ENCODE measurements at regions of chr7 and their contacts with region 1.

Region 1: GRCh38 chr7:93231799-93232672 is at the start of gene VPS50:
- DNase-seq: peak; percentile 96
- ATAC-seq: peak; percentile 99
- H3K4me3 Mint-ChIP-seq: peak within 1 kb of the TSS; percentile 85
- H3K27ac Mint-ChIP-seq: peak within 1 kb of the TSS; percentile 88
- H3K4me1 Mint-ChIP-seq: peaks cover 10% of the 10 kb centered on the region
- H3K27me3 Mint-ChIP-seq: no peaks in the 10 kb centered on the region
- total RNA-seq, gene VPS50: 12.8 to 14.7 TPM

Region 2: GRCh38 chr7:91940572-91941341 is 1291.3 kb before region 1 on chr7 and contains the start of gene AKAP9:
- CTCF ChIA-PET with region 1: no interaction called
- POLR2A ChIA-PET with region 1: no interaction called
- intact Hi-C with region 1: loop called in 1 of 2 experiments (anchors 5 kb)
- DNase-seq: peak; percentile 94
- ATAC-seq: peak; percentile 91
- H3K4me3 Mint-ChIP-seq: peak within 1 kb of the TSS; percentile 87
- H3K27ac Mint-ChIP-seq: peak within 1 kb of the TSS; percentile 94
- H3K4me1 Mint-ChIP-seq: peaks cover 29% of the 10 kb centered on the region
- H3K27me3 Mint-ChIP-seq: no peaks in the 10 kb centered on the region
- total RNA-seq, gene AKAP9: 25.3 to 25.4 TPM

Region 3: GRCh38 chr7:92528188-92528957 is 703.7 kb before region 1 on chr7 and contains the starts of genes PEX1 and RBM48:
- CTCF ChIA-PET with region 1: no interaction called
- POLR2A ChIA-PET with region 1: no interaction called
- intact Hi-C with region 1: loop called (anchors 1 kb)
- DNase-seq: peak; percentile 98
- ATAC-seq: peak; percentile 95
- H3K4me3 Mint-ChIP-seq: peak within 1 kb of the TSS; percentile 90
- H3K27ac Mint-ChIP-seq: peak within 1 kb of the TSS; percentile 93
- H3K4me1 Mint-ChIP-seq: peaks cover 29% of the 10 kb centered on the region
- H3K27me3 Mint-ChIP-seq: no peaks in the 10 kb centered on the region
- total RNA-seq, gene PEX1: 14.7 to 16.0 TPM
- total RNA-seq, gene RBM48: 12.8 to 13.1 TPM

Region 4: GRCh38 chr7:92621026-92621540 is 611.0 kb before region 1 on chr7:
- CTCF ChIA-PET with region 1: no interaction called
- POLR2A ChIA-PET with region 1: no interaction called
- intact Hi-C with region 1: loop called in 1 of 2 experiments (anchors 1 kb)
- DNase-seq: peak; percentile 90
- ATAC-seq: peak; percentile 78
- H3K4me3 Mint-ChIP-seq: peak overlapping the region; percentile 0
- H3K27ac Mint-ChIP-seq: peak overlapping the region; percentile 90
- H3K4me1 Mint-ChIP-seq: peaks cover 50% of the 10 kb centered on the region
- H3K27me3 Mint-ChIP-seq: no peaks in the 10 kb centered on the region

Region 5: GRCh38 chr7:93117852-93118530 is 114.0 kb before region 1 on chr7 and contains the start of gene SAMD9:
- CTCF ChIA-PET with region 1: interaction called, 5 read pairs
- POLR2A ChIA-PET with region 1: no interaction called
- intact Hi-C with region 1: loop called (anchors 1 to 2 kb)
- DNase-seq: peak; percentile 65
- ATAC-seq: peak; percentile 89
- H3K4me3 Mint-ChIP-seq: peak within 1 kb of the TSS; percentile 78
- H3K27ac Mint-ChIP-seq: peak within 1 kb of the TSS; percentile 88
- H3K4me1 Mint-ChIP-seq: peaks cover 49% of the 10 kb centered on the region
- H3K27me3 Mint-ChIP-seq: no peaks in the 10 kb centered on the region
- total RNA-seq, gene SAMD9: 10.2 to 10.7 TPM

Region 6: DNA sequence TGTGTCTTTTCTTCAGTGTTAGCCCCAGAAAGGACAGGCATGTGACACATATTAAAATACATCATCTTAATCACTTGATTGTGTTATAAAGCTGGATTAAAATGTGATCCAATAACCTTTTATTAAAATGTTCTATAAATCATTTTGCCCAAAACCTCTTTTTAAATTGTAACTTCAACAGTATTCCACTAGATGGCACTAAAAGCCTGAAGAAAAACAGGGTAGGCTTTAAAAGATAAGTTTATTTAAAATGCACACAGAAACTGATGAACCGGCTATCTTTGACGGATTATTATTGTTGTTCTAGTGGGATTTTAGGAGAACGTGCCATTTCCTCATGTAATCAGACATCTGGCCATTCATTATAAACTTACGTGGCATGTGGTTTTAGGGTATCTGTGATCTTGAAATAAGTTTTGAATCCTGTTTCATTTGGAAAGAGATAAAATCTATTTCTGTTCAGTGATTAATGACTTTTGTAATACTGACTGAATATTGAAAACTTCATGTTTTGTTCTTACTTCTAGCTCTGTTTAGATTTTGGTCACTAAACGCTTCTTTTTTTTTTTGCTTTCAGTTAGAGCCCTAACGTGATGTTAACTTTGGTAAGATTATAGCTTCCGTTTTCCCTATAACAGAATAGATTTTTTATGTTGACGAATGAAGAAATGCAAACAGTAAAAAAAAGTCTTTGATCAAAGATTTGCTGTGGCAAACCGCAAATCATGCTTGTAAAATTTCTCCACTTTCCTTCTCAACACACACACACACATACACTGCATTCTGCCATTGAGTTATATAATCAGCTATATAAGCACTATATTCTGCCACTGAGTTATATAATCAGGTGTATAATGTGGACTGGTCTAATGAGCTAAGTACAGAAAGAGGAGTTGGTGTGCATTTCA is 13.7 kb after region 1 on chr7:
- CTCF ChIA-PET with region 1: interaction called, 20 read pairs
- POLR2A ChIA-PET with region 1: no interaction called
- intact Hi-C with region 1: no loop called
- DNase-seq: no peak
- ATAC-seq: no peak
- H3K4me3 Mint-ChIP-seq: no peak overlapping the region
- H3K27ac Mint-ChIP-seq: no peak overlapping the region
- H3K4me1 Mint-ChIP-seq: peaks cover 11% of the 10 kb centered on the region
- H3K27me3 Mint-ChIP-seq: no peaks in the 10 kb centered on the region

Region 7: GRCh38 chr7:94509879-94510581 is 1278.0 kb after region 1 on chr7:
- CTCF ChIA-PET with region 1: no interaction called
- POLR2A ChIA-PET with region 1: no interaction called
- intact Hi-C with region 1: loop called in 1 of 2 experiments (anchors 5 kb)
- DNase-seq: peak; percentile 81
- ATAC-seq: peak; percentile 77
- H3K4me3 Mint-ChIP-seq: peak overlapping the region; percentile 80
- H3K27ac Mint-ChIP-seq: peak overlapping the region; percentile 93
- H3K4me1 Mint-ChIP-seq: peaks cover 43% of the 10 kb centered on the region
- H3K27me3 Mint-ChIP-seq: no peaks in the 10 kb centered on the region